ENCODE measurements at regions of chr13 and their contacts with region 1.

Region 1: DNA sequence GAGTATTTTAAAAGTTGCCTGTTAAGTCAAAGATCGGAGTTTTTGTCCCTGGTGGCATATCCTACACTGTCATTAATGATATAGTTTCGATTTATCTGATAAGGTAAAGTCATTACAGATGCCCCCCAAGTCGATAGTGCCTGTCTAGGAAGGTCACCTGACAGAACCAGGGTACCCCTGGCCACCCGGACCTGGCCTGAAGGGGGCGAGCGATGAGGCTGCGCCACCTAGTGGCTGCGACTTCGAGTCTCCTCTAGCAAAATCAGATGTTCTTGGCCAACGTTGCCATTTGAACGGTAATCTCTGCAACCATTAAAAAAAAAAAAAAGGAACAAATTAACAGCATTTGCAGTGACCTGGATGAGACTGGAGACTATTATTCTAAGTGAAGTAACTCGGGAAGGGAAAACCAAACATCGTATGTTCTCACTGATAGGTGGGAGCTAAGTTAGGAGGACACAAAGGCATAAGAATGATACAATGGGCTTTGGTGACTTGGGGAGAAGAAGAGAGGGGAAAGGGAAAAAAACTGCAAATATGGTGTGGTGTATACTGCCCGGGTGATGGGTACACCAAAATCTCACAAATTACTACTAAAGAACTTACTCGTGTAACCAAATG is 565.1 kb downstream of the LIG4 start:
- DNase-seq: peak in 6 of 9 experiments; percentile 0 to 48 (median 18)
- ATAC-seq: no peak
- H3K4me3 ChIP-seq: no peak overlapping the region
- H3K4me3 Mint-ChIP-seq: no peak overlapping the region
- H3K27ac ChIP-seq: no peak overlapping the region
- H3K27ac Mint-ChIP-seq: no peak overlapping the region
- H3K4me1 ChIP-seq: no peaks in the 10 kb centered on the region
- H3K4me1 Mint-ChIP-seq: no peaks in the 10 kb centered on the region
- H3K27me3 ChIP-seq: no peaks in the 10 kb centered on the region
- H3K27me3 Mint-ChIP-seq: no peaks in the 10 kb centered on the region
- CTCF ChIP-seq: peak; percentile 19

Region 2: DNA sequence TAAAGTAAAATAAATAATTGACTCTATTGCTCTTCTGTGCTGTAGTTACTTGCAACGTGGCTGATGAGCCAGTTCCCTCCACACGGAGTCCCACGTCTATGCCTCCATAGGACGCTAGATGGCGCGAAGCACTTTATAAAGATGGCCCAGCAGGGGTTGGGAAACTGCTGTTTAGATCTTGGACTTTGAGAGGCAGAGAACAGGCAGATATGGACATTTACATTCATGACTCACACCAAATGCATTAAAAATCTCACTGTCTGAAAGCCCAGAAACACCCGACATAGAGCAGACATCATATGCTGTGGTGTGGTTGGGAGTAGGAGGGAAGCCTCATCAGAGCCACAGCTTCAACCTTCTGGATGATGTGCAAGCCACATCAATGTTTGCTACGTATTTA is 439.1 kb before region 1 on chr13:
- CTCF ChIA-PET with region 1: interaction called, 3 read pairs
- POLR2A ChIA-PET with region 1: no interaction called
- intact Hi-C with region 1: loop called in 1 of 2 experiments (anchors 2 kb)
- DNase-seq: peak in 6 of 9 experiments; percentile 5 to 52 (median 28)
- ATAC-seq: no peak
- H3K4me3 ChIP-seq: no peak overlapping the region
- H3K4me3 Mint-ChIP-seq: no peak overlapping the region
- H3K27ac ChIP-seq: no peak overlapping the region
- H3K27ac Mint-ChIP-seq: no peak overlapping the region
- H3K4me1 ChIP-seq: no peaks in the 10 kb centered on the region
- H3K4me1 Mint-ChIP-seq: no peaks in the 10 kb centered on the region
- H3K27me3 ChIP-seq: no peaks in the 10 kb centered on the region
- H3K27me3 Mint-ChIP-seq: peaks cover 6% of the 10 kb centered on the region
- CTCF ChIP-seq: peak; percentile 64

Region 3: DNA sequence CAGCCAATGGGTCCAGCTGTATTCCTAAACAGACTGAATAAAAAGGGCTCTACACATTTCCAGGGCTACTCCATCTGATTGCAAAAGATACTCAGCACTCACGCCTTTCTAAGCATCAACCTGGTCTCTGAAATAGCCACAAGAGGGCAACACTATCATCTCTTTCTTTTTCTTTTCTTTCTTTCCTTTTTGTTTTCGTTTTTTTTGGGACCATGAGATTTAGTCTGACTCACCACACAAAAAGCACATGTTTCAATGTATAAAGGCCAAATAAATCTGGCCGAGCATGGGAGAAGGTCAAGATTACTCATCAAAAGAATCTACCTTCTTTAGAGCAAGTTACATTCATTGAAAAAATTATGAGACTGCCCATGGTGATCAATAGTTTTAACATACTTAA is 276.6 kb before region 1 on chr13:
- CTCF ChIA-PET with region 1: no interaction called
- POLR2A ChIA-PET with region 1: no interaction called
- intact Hi-C with region 1: loop called (anchors 5 to 10 kb)
- DNase-seq: no peak
- ATAC-seq: no peak
- H3K4me3 ChIP-seq: no peak overlapping the region
- H3K4me3 Mint-ChIP-seq: no peak overlapping the region
- H3K27ac ChIP-seq: no peak overlapping the region
- H3K27ac Mint-ChIP-seq: no peak overlapping the region
- H3K4me1 ChIP-seq: no peaks in the 10 kb centered on the region
- H3K4me1 Mint-ChIP-seq: no peaks in the 10 kb centered on the region
- H3K27me3 ChIP-seq: no peaks in the 10 kb centered on the region
- H3K27me3 Mint-ChIP-seq: no peaks in the 10 kb centered on the region
- CTCF ChIP-seq: no peak

Measured in CD8-positive, alpha-beta T cell (primary cell).